ENCODE measurements at regions of chr13 and their contacts with region 1.

Region 1: DNA sequence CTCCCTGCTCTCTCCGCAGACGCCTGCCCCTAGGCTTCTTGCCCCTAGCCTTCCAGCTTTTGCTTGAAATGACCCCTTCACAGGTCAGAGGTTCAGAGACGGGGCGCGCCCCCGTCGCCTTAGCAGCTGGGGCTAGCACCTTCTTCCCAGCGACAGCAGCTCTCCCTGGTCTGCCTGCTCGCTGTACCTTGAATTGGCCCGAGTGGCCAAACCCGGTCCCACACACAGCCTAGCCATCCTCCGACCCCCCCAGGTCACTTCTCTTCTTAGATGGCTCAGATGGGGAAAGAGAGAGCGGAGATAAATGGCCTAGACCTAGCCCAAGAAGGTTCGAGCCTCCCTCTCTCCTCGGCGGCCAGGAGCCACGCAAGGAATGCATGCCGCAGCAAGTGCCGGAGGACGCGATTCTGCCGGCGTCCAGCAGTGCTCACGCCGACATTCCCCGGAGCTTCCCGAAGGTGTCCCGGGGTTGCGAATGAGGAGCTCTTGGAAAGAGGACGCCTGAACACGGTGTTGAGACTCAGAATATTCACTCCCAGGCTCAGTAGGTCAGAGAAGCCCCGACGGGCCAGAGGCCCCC is 1.3 kb downstream of the CDX2 start:
- DNase-seq: no peak
- H3K4me3 Mint-ChIP-seq: no peak overlapping the region
- H3K27ac Mint-ChIP-seq: peak overlapping the region; percentile 75
- H3K4me1 Mint-ChIP-seq: peaks cover 4% of the 10 kb centered on the region
- H3K27me3 Mint-ChIP-seq: peaks cover 76% of the 10 kb centered on the region

Region 2: GRCh38 chr13:27792393-27793218 is 175.2 kb before region 1 on chr13 and contains the start of gene GSX1:
- intact Hi-C with region 1: loop called (anchors 2 kb)
- DNase-seq: peak; percentile 83
- H3K4me3 Mint-ChIP-seq: peak within 1 kb of the TSS; percentile 76
- H3K27ac Mint-ChIP-seq: peak within 1 kb of the TSS; percentile 46
- H3K4me1 Mint-ChIP-seq: peaks cover 21% of the 10 kb centered on the region
- H3K27me3 Mint-ChIP-seq: peaks cover 76% of the 10 kb centered on the region
- total RNA-seq, gene GSX1: not detected in 2 replicates

Region 3: GRCh38 chr13:27919934-27920676 is 47.7 kb before region 1 on chr13 and contains the start of gene PDX1:
- intact Hi-C with region 1: loop called (anchors 1 kb)
- DNase-seq: no peak
- H3K4me3 Mint-ChIP-seq: peak within 1 kb of the TSS; percentile 67
- H3K27ac Mint-ChIP-seq: peak within 1 kb of the TSS; percentile 72
- H3K4me1 Mint-ChIP-seq: peaks cover 12% of the 10 kb centered on the region
- H3K27me3 Mint-ChIP-seq: peaks cover 77% of the 10 kb centered on the region
- total RNA-seq, gene PDX1: not detected in 2 replicates

Region 4: DNA sequence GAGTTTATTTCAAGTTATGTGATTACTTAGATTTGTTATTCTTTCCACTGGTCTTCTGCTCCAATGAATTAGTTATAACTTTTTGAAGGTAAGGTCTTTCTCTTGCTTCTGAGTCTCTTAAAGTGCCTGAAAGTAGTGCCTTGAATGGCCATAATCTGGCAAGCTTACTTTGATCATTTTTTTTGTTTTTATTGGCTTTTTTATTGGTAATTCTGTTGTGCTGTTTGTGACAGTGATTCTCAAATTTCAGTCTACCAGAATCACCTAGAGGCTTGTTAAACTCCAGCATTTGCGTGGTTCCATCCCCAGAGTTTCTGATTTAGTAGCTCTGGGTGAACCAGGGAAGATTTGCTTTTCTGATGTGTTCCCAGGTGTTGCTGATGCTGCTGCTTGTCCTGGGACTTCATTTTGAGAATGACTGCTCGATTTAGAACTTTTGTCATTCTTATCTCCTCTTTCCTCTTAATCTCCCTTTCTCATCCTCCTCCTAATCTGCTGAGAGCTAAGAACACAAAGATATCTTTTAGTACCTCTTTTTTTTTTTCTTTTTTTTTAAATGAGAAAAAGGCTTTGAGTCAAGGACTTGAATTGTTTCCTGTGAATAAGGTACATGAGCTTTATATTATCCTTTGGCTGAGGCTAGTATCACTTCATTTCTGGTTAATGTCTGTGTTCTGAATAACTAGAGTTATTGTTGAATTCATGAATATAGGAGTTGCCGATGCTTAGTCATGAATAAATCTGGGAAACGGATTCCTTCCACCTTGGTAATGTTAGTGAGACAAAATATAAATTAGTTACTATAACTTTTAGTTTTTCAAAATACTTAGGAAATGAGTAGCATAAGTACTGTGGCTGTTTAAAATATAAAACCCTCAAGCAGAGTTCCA is 261.9 kb after region 1 on chr13:
- intact Hi-C with region 1: no loop called
- DNase-seq: no peak
- H3K4me3 Mint-ChIP-seq: no peak overlapping the region
- H3K27ac Mint-ChIP-seq: no peak overlapping the region
- H3K4me1 Mint-ChIP-seq: no peaks in the 10 kb centered on the region
- H3K27me3 Mint-ChIP-seq: no peaks in the 10 kb centered on the region

Measured in activated CD4-positive, alpha-beta T cell treated with anti-CD3 and anti-CD28 coated beads, Interleukin-2, amount 10 ng/mL, durations not matched to agents 24 days and 14 days (primary cell).